CD4-positive, alpha-beta T cell (primary cell): ENCODE measurements at regions of chr19 and their contacts with region 1.

Region 1: GRCh38 chr19:50357178-50358100 is 8.0 kb downstream of the NAPSA start:
- DNase-seq: peak; percentile 73 to 94 (median 85)
- ATAC-seq: peak; percentile 84
- H3K4me3 ChIP-seq: peak overlapping the region; percentile 62
- H3K4me3 Mint-ChIP-seq: peak overlapping the region; percentile 94
- H3K27ac ChIP-seq: peak overlapping the region; percentile 94 to 96
- H3K27ac Mint-ChIP-seq: peak overlapping the region; percentile 98
- H3K4me1 ChIP-seq: peaks cover 34% of the 10 kb centered on the region
- H3K4me1 Mint-ChIP-seq: peaks cover 51% of the 10 kb centered on the region
- H3K27me3 ChIP-seq: no peaks in the 10 kb centered on the region
- H3K27me3 Mint-ChIP-seq: no peaks in the 10 kb centered on the region
- CTCF ChIP-seq: peak; percentile 92

Region 2: DNA sequence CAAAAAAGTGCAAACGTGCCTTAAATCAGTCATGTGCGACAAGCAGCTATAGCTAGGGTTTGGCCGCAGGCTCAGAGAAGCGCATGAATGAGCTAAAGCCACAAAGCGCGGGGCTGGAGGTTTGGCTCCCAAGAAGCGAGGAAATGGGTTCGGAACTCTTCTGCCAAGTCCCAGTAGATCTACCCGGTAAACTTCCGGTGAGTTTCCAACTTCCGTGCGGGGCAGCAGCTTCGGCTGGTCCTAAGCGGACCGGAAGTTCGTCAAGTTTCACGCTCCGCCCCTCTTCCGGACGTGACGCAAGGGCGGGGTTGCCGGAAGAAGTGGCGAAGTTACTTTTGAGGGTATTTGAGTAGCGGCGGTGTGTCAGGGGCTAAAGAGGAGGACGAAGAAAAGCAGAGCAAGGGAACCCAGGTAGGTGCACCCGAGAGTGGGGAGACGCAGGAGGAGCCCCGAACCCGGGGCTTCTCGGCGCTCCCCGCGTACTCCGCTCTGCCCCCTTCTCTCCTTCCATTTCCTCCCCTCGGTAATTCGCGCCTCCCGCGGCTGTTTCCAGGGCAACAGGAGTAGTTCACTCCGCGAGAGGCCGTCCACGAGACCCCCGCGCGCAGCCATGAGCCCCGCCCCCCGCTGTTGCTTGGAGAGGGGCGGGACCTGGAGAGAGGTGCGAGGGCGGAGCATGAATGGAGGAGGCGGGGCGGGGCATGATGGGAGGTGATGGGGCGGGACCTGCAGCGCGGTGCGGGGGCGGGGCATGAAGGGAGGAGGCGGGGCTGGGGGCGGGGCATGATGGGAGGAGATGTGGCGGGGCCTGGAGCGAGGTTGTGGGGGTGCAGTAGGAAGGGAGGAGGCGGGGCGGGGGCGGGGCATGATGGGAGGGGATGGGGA is 19.0 kb after region 1 on chr19 and contains the start of gene NR1H2:
- CTCF ChIA-PET with region 1: interaction called, 8 read pairs
- POLR2A ChIA-PET with region 1: interaction called, 43 read pairs
- intact Hi-C with region 1: no loop called
- DNase-seq: peak; percentile 90 to 99 (median 94)
- ATAC-seq: peak; percentile 82
- H3K4me3 ChIP-seq: peak within 1 kb of the TSS; percentile 94
- H3K4me3 Mint-ChIP-seq: peak within 1 kb of the TSS; percentile 98
- H3K27ac ChIP-seq: peak within 1 kb of the TSS; percentile 99 to 100
- H3K27ac Mint-ChIP-seq: peak within 1 kb of the TSS; percentile 99
- H3K4me1 ChIP-seq: peaks cover 21% of the 10 kb centered on the region
- H3K4me1 Mint-ChIP-seq: peaks cover 20% of the 10 kb centered on the region
- H3K27me3 ChIP-seq: no peaks in the 10 kb centered on the region
- H3K27me3 Mint-ChIP-seq: no peaks in the 10 kb centered on the region
- CTCF ChIP-seq: no peak
- total RNA-seq, gene NR1H2: 261 to 265 TPM

Region 3: GRCh38 chr19:50461066-50461875 is 103.8 kb after region 1 on chr19:
- CTCF ChIA-PET with region 1: interaction called, 3 read pairs
- POLR2A ChIA-PET with region 1: interaction called, 7 read pairs
- intact Hi-C with region 1: loop called (anchors 1 kb)
- DNase-seq: peak in 13 of 14 experiments; percentile 26 to 79 (median 45)
- ATAC-seq: peak; percentile 90
- H3K4me3 ChIP-seq: no peak overlapping the region
- H3K4me3 Mint-ChIP-seq: no peak overlapping the region
- H3K27ac ChIP-seq: no peak overlapping the region
- H3K27ac Mint-ChIP-seq: no peak overlapping the region
- H3K4me1 ChIP-seq: peaks cover 5% of the 10 kb centered on the region
- H3K4me1 Mint-ChIP-seq: no peaks in the 10 kb centered on the region
- H3K27me3 ChIP-seq: peaks cover 7 to 19% of the 10 kb centered on the region in 2 experiments
- H3K27me3 Mint-ChIP-seq: peaks cover 51% of the 10 kb centered on the region
- CTCF ChIP-seq: peak; percentile 70

Region 4: DNA sequence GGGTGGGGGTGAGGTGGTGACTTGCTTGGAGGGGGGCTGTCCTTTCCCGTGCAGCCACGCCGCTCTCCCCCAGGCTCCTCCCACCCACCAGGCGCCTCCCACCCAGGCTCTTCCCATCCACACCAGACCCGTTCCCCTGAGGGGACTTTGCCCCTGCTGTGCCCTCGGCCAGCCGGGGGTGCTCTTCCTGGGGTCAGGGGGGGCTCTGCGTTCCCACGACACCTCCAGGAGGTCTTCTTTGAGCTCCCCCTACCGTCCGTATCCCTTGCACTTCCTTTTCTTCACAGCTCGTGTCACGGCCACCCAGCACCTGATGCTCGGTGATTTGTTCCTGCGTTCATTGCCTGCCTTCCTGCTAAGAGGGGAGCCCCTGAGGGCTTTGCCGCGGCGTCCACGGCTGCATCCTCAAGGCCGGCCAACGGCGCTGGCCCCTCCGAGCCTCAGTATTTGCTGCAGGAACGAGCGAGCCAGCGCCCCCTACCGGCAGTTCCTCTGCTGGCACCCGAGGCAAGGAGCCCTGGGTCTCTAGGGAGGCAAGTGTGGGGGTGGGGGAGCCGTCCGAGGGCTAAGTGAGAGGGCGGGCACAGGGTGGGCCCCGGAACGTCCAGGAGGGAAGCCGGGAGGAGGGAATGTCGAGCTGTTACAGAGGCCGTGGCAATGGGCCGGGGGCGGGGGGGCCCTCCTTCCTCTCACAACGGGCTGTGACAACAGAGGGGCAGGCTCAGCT is 199.0 kb after region 1 on chr19:
- CTCF ChIA-PET with region 1: interaction called, 3 read pairs
- POLR2A ChIA-PET with region 1: interaction called, 3 read pairs
- intact Hi-C with region 1: loop called in 1 of 2 experiments (anchors 5 kb)
- DNase-seq: peak; percentile 49 to 82 (median 68)
- ATAC-seq: peak; percentile 79
- H3K4me3 ChIP-seq: peak overlapping the region; percentile 47
- H3K4me3 Mint-ChIP-seq: peak overlapping the region; percentile 90
- H3K27ac ChIP-seq: no peak overlapping the region
- H3K27ac Mint-ChIP-seq: no peak overlapping the region
- H3K4me1 ChIP-seq: peaks cover 17% of the 10 kb centered on the region
- H3K4me1 Mint-ChIP-seq: peaks cover 9% of the 10 kb centered on the region
- H3K27me3 ChIP-seq: peaks cover 35 to 56% of the 10 kb centered on the region in 2 experiments
- H3K27me3 Mint-ChIP-seq: peaks cover 87% of the 10 kb centered on the region
- CTCF ChIP-seq: peak; percentile 84

Region 5: DNA sequence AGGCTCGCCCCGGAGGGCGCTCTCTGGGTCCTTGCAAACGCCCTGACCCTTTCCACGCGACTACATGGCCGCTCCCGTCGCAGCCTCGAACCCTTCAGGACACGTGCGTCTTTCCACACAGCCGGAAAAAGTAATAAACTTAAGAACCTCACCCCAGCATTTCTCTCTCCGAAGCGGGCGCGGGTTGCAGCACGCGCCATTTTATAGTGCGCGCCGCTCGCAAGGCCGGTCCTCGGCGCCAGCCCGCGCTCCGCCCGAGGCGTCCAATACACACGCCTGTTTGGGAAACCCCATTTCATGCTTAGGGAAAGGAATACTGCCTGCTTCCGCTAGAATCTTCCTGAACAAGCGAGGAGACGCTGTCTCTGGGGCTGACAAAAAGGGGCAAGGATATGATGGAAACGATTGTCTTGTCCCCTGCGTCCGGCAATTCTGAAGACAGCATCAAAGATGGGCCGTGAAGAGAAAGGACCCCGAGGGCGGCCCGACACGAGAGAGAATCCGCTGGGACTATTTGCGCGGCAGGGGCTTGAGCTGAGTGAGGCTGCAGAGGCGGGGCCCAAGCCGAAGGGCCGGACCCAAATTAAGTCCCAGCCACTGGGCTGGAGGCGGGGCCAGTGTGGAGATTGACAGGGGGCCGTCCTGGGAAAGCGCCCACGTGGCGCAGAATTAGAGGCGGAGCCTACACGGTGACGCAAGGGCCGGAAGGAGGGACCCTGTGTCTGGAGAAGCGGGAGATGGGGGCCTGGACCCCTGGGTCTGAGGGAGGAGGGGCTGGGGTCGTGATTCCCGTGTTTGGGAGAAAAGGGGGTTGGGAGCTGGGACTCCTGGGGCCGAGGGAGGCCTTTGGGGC is 447.2 kb after region 1 on chr19:
- CTCF ChIA-PET with region 1: no interaction called
- POLR2A ChIA-PET with region 1: interaction called, 10 read pairs
- intact Hi-C with region 1: no loop called
- DNase-seq: peak; percentile 94 to 99 (median 96)
- ATAC-seq: peak; percentile 94
- H3K4me3 ChIP-seq: peak overlapping the region; percentile 91
- H3K4me3 Mint-ChIP-seq: peak overlapping the region; percentile 99
- H3K27ac ChIP-seq: peak overlapping the region; percentile 99 to 100
- H3K27ac Mint-ChIP-seq: peak overlapping the region; percentile 97
- H3K4me1 ChIP-seq: peaks cover 31% of the 10 kb centered on the region
- H3K4me1 Mint-ChIP-seq: peaks cover 38% of the 10 kb centered on the region
- H3K27me3 ChIP-seq: no peaks in the 10 kb centered on the region
- H3K27me3 Mint-ChIP-seq: no peaks in the 10 kb centered on the region
- CTCF ChIP-seq: no peak